Natural killer cell (primary cell): ENCODE measurements at regions of chr6 and their contacts with region 1.

Region 1: DNA sequence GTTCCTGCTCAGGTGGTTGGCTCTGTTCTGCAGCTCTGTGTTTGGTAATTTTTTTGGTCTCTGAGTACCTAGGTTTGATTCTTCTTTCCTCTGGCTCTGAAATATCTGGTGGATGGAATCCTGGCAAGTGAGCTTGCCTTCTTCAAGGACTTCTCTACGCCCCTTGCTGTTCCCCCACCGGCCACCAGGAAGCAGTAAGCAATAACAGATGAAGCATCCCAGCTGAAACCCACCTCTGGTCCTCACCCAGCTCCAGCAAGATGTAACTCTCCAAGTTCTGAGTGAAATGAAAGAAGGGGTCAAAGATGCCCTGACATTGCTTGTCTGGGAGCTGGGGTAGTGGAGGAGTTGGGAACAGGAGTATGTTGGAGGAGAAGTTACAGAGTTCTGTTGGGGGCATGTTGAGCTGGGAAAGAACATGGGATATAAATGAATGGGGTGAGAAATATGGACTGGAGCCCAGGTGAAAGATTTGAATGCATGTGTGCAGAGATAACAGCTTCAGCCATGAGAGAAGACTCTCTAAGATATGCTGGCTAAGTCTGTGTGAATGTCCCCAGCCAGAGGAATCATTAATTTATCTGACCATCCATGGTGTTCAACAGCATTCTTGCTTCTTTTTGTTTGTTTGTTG is 51.3 kb upstream of the GLP1R start:
- DNase-seq: peak; percentile 26 to 52
- ATAC-seq: peak in 2 of 3 donors; percentile 53 to 57
- H3K4me3 ChIP-seq: no peak overlapping the region
- H3K4me3 Mint-ChIP-seq: no peak overlapping the region
- H3K27ac ChIP-seq: no peak overlapping the region
- H3K27ac Mint-ChIP-seq: no peak overlapping the region
- H3K4me1 ChIP-seq: no peaks in the 10 kb centered on the region
- H3K4me1 Mint-ChIP-seq: no peaks in the 10 kb centered on the region
- H3K27me3 ChIP-seq: no peaks in the 10 kb centered on the region
- H3K27me3 Mint-ChIP-seq: peaks cover 38 to 49% of the 10 kb centered on the region in 2 donors
- CTCF ChIP-seq: peak; percentile 37

Region 2: DNA sequence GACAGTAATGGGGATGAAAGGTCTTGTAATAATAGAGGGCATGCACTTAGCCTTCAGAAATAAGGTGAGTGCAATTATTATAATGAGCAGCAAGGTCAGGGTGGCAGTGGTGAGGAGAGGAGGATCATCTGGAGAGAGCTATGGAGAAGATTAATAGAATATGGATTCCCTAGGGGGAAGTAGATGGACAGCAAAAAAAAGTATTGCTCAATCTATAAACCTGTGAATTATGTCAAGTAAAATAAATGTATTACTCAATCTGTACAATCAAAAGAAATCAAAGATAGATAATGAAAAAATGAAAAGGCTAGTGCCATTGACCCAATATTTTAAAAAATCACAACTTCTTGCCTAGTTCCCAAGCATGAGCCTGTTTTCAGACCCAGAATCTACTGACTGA is 336.9 kb before region 1 on chr6:
- intact Hi-C with region 1: no loop called
- DNase-seq: no peak
- ATAC-seq: no peak
- H3K4me3 ChIP-seq: no peak overlapping the region
- H3K4me3 Mint-ChIP-seq: no peak overlapping the region
- H3K27ac ChIP-seq: no peak overlapping the region
- H3K27ac Mint-ChIP-seq: peak overlapping the region in 1 of 2 donors; percentile 4
- H3K4me1 ChIP-seq: peaks cover 7% of the 10 kb centered on the region
- H3K4me1 Mint-ChIP-seq: peaks cover 11 to 19% of the 10 kb centered on the region in 2 donors
- H3K27me3 ChIP-seq: no peaks in the 10 kb centered on the region
- H3K27me3 Mint-ChIP-seq: no peaks in the 10 kb centered on the region
- CTCF ChIP-seq: no peak

Region 3: DNA sequence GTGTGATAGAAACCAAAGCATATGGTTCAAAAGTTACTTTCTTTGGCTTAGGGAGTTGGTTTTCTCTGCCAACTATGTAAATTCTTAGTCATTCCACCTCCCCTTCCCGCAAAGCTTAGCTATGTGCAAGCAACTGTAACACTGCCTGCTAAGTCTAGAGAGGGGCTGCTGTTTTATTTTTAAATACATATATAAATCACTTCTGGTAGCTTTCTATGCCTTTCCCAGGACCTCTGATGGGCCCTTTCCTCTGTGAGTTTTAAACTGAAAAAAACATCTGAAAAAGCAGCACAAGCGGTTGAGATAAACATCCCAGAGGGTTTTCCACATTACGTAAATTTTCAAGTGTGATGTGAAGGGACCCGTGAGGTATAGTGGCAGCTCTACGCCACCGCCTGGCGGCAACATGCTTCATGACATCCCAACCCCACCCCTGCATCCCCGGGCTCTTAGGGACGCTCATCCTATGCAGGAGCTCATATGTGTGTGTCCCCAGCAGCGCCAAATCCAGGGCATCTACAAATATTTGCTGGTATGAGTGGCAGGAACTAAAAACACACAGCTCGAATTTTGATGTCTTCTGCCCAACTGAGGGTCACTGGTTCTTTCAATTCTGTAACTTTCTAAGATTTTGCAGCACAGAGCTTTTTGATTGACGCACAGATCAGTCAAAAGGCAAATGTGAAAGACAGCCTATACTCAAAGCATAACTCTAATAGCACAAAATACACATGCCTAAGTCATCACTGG is 105.0 kb after region 1 on chr6:
- intact Hi-C with region 1: loop called (anchors 2 kb)
- DNase-seq: peak in 1 of 2 donors; percentile 44
- ATAC-seq: peak; percentile 56 to 84 (median 82)
- H3K4me3 ChIP-seq: no peak overlapping the region
- H3K4me3 Mint-ChIP-seq: no peak overlapping the region
- H3K27ac ChIP-seq: no peak overlapping the region
- H3K27ac Mint-ChIP-seq: no peak overlapping the region
- H3K4me1 ChIP-seq: no peaks in the 10 kb centered on the region
- H3K4me1 Mint-ChIP-seq: peaks cover 19 to 43% of the 10 kb centered on the region in 2 donors
- H3K27me3 ChIP-seq: no peaks in the 10 kb centered on the region
- H3K27me3 Mint-ChIP-seq: no peaks in the 10 kb centered on the region
- CTCF ChIP-seq: peak; percentile 22